Activated CD4-positive, alpha-beta memory T cell treated with anti-CD3 and anti-CD28 coated beads for 36 hours (primary cell): ENCODE measurements at regions of chr19 and their contacts with region 1.

Region 1: GRCh38 chr19:3429581-3430080 is 50.7 kb downstream of the SMIM24 start:
- DNase-seq: peak; percentile 85
- H3K4me3 Mint-ChIP-seq: no peak overlapping the region
- H3K27ac Mint-ChIP-seq: no peak overlapping the region
- H3K4me1 Mint-ChIP-seq: peaks cover 7% of the 10 kb centered on the region
- H3K27me3 Mint-ChIP-seq: no peaks in the 10 kb centered on the region

Region 2: DNA sequence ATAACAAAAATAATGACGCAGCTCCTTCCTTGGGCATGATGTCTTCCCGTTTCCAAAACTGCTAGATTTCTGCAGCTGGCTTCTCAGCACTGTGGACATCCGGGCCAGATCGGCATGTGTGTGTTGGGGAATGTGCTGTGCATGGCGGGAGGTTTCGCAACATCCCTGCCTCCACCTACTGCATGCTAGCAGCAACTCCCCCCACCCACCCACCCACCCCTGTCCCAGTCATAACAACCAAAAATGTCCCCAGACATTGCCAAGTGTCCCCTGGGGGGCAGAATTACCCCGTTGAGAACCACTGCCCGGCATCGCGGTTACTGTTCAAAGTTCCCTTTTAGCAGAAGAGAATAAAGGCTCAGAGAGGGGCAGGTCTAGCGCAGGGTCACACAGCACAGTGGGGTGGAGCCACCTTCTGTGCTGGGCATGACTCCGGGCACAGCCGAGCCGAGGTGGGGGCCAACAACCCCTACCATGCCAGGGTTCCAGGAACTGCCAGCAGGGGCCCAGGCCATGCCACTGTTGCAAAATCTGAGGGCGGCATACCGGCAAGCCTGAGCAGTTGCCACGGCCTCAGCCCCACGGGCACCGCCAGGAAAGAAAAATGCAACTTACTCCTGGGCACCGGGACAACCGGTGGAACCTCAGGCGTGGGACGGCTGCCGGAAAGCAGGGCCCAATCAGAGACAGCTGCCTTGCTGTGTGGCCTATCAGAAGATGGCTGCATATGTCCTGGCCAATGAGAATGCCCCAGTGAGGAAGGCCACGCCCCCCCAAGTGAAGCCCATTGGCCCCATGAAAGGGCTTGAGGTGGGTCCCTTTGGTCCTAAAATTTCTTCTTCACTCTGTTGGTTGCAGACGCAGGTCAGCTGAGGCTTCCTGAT is 85.8 kb before region 1 on chr19:
- CTCF ChIA-PET with region 1: interaction called, 14 read pairs
- POLR2A ChIA-PET with region 1: no interaction called
- intact Hi-C with region 1: no loop called
- DNase-seq: peak; percentile 59
- H3K4me3 Mint-ChIP-seq: peak overlapping the region; percentile 41
- H3K27ac Mint-ChIP-seq: no peak overlapping the region
- H3K4me1 Mint-ChIP-seq: peaks cover under 1% of the 10 kb centered on the region
- H3K27me3 Mint-ChIP-seq: no peaks in the 10 kb centered on the region

Region 3: DNA sequence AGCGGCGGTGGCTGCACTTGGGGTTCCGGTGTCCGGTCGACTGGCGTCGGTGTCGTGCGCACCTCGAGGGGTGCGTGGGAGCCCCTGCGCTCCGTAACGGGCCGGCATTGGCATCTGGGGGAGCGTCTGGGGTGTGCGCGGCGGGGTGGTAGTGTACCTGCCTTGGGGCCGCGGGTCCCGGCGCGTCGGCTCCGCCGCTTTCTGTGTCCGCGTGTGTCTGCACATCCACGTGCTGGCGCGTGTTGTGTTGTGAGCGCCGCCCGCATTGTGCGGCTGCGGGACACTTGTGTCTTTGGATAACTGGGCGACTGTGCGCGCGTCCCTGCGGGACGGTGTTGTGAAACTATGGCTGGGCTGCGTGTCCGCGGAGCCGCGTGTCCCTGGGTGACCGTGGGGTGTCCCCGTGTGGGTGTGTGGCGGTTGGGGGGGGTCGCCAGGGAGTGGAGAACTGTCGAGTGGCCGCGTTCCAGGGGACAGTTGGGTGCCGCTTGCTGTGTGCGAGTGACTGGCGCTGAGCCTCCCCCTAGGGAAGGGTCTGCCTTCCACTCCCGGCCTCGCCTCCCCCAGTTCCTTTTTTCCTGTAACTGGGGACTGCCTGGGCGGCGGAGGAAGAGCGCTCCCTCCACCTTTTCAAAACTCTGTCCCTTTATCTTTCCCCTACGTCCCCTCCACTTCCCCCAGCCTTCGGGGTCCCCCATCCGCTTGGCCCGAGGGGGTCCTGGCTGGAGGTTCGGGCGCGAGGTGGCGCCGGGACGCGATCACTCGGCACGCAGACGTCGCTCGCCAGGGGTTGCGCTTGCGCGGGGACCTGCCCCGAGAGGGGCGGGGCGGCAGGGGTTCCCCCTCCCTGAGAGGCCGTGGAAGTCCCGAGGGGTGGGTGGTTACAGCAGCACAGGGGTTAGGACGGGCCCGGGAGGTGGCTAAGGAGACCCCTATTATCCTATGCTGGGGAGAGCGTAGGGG is 68.9 kb before region 1 on chr19:
- CTCF ChIA-PET with region 1: interaction called, 7 read pairs
- POLR2A ChIA-PET with region 1: no interaction called
- intact Hi-C with region 1: loop called (anchors 2 kb)
- DNase-seq: peak; percentile 78
- H3K4me3 Mint-ChIP-seq: peak overlapping the region; percentile 85
- H3K27ac Mint-ChIP-seq: peak overlapping the region; percentile 85
- H3K4me1 Mint-ChIP-seq: peaks cover 34% of the 10 kb centered on the region
- H3K27me3 Mint-ChIP-seq: peaks cover 2% of the 10 kb centered on the region

Region 4: DNA sequence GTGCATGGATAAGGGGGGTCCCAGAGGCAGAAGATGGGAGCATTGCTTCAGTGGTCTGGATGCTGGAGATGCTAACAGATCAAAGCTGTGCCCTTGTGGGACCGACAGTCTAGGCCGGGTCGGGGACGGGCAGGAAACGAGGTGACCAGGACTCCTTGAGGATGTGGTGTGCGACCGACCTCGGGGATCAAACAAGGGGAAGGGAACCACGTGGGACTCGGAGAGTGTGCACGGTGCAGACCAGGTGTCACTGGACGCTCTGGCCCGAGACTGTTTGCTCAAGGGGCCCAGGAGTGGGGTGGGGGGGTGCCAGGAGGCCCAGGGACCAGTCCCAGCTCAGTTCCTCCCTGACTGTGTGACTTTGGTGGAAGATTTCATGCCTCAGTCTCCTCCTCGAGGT is 57.2 kb before region 1 on chr19:
- CTCF ChIA-PET with region 1: no interaction called
- POLR2A ChIA-PET with region 1: no interaction called
- intact Hi-C with region 1: no loop called
- DNase-seq: no peak
- H3K4me3 Mint-ChIP-seq: no peak overlapping the region
- H3K27ac Mint-ChIP-seq: no peak overlapping the region
- H3K4me1 Mint-ChIP-seq: peaks cover 30% of the 10 kb centered on the region
- H3K27me3 Mint-ChIP-seq: no peaks in the 10 kb centered on the region

Region 5: GRCh38 chr19:3494051-3494450 is 64.4 kb after region 1 on chr19:
- CTCF ChIA-PET with region 1: no interaction called
- POLR2A ChIA-PET with region 1: no interaction called
- intact Hi-C with region 1: no loop called
- DNase-seq: peak; percentile 68
- H3K4me3 Mint-ChIP-seq: peak overlapping the region; percentile 32
- H3K27ac Mint-ChIP-seq: peak overlapping the region; percentile 77
- H3K4me1 Mint-ChIP-seq: peaks cover 11% of the 10 kb centered on the region
- H3K27me3 Mint-ChIP-seq: no peaks in the 10 kb centered on the region